Head of caudate nucleus (tissue), 42 donors: ENCODE measurements at regions of chr1 and their contacts with region 1.

Region 1: DNA sequence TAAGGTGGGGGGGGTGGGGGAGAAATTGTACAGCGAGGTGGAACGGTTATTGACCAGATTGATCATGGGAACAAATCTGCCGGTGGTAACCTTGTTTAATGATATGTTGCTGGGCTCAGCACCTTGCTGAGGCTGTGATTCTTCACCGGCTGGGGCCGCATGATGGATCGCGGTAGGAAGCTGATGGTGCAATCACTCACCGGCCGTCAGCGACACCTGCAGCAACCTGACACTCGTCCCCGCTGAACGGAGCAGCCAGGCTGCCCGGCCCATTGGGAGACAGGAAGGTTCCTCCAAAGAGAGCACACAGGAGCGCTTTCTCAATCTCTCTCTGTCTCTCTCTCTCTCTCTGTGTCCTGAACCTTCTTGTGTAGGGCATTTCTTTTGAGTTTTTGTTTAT is 128.5 kb upstream of the RRP15 start:
- DNase-seq: no peak

Region 2: DNA sequence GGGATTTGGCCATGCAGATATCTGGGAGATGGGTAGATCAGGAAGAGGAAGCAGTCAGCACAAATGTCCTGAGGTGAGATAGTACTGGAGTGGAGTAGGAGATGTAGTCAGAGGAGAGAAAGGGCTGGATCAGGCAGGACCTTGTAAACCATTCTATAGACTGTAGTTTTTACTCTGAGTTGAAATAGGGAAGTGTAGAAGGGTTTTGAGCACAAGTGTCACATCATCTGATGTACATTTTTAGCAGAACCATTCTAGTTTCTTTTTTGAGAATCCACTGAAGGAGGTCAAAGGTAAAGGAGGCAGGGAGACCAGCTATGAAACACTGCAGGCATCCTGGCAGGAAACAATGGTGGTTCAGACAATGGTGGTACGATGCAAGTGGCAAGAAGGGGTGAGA is 66.1 kb before region 1 on chr1:
- intact Hi-C with region 1: loop called (anchors 10 kb)
- DNase-seq: no peak

Region 3: GRCh38 chr1:218284934-218285635 is 128.5 kb after region 1 on chr1 and contains the start of gene RRP15:
- intact Hi-C with region 1: no loop called
- DNase-seq: peak; percentile 81 to 96 (median 89)